ENCODE measurements at regions of chr20 and their contacts with region 1.

Region 1: DNA sequence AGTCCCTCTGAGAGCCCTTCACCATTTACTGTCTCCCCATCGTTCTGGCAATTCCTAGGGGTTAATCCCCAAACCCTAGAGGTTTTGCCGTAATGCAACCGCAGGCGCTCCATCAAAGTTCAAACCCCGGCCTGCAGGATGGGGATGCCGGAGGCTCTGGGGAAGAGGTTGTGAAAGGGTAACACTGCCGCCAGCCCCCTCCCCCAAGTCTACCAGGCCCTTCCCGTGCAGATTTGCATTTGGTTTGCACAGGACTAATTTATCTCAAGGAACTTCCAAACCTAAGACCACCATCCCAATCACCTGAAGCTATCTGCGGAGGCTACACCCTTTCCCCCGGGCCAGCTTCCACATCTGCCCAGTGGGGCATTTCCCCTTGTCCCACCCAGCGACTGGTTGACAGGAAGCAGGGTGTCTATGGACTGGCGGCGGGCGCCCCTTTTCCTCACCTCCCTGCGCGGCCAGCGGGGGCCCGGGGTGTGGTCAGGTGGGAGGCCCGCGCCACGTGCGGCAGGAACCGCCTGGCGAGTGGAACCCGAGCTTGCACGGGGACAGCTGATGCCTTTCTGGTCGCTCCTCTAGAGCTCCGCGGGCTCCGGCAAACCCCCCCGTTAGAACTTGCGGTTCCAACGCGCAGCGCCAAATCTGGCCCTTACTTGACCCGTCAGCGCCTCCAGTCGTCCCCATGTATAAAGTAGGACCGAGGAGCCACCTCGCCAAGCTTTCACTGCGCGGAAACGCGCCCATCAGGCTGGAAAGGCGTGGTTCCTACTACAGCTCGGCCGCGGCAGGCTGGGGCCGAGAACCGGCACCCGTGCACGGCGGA is 9.4 kb upstream of the SLC4A11 start:
- DNase-seq: peak; percentile 47
- ATAC-seq: peak; percentile 45
- H3K4me3 Mint-ChIP-seq: peak overlapping the region; percentile 8
- H3K27ac Mint-ChIP-seq: no peak overlapping the region
- H3K4me1 Mint-ChIP-seq: peaks cover 2% of the 10 kb centered on the region
- H3K27me3 Mint-ChIP-seq: peaks cover 23% of the 10 kb centered on the region

Region 2: DNA sequence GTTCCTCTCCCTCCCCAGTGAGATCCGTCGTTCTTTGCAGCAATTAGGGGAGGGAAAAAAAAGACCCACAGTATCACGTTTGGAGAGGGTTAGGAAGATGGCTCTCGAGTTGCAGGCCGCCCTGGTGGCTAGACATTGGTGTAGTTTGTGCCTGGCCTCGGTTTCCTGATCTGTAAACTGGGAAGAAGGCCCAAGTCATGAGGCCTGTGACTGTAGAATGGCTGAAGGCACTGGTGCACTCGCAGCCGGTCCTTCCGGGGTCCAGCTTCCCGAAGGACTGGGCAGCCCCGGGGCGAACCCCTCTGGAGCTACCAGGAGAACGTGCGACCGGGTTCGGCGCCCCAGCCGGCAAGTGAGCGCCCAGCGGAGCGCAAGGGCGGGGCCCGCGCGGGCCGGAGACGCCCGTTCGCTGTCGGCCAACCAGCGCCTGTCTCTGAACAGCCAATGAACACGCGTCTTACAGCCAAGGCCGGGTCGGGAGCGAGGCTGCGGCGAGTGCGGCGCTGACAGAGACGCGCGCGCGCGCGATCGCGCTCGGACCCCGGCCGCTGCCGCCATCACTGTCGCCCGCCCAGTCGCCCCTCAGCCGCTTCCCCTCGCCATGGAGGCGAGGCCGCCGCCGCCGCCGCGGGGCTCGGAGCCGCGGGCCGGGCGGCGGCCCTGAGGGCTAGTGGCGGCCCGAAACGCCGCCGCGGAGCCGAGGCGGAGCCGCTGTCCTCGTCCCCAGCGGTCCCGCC is 375.2 kb before region 1 on chr20 and contains the start of gene PTPRA:
- CTCF ChIA-PET with region 1: no interaction called
- POLR2A ChIA-PET with region 1: no interaction called
- intact Hi-C with region 1: no loop called
- DNase-seq: peak; percentile 96
- ATAC-seq: peak; percentile 91
- H3K4me3 Mint-ChIP-seq: peak within 1 kb of the TSS; percentile 84
- H3K27ac Mint-ChIP-seq: peak within 1 kb of the TSS; percentile 95
- H3K4me1 Mint-ChIP-seq: peaks cover 44% of the 10 kb centered on the region
- H3K27me3 Mint-ChIP-seq: no peaks in the 10 kb centered on the region
- total RNA-seq, gene PTPRA: 58.5 to 86.3 TPM

Region 3: GRCh38 chr20:3224681-3225421 is 23.5 kb before region 1 on chr20:
- CTCF ChIA-PET with region 1: interaction called, 5 read pairs
- POLR2A ChIA-PET with region 1: no interaction called
- intact Hi-C with region 1: loop called in 1 of 2 experiments (anchors 2 kb)
- DNase-seq: no peak
- ATAC-seq: no peak
- H3K4me3 Mint-ChIP-seq: no peak overlapping the region
- H3K27ac Mint-ChIP-seq: no peak overlapping the region
- H3K4me1 Mint-ChIP-seq: peaks cover 17% of the 10 kb centered on the region
- H3K27me3 Mint-ChIP-seq: no peaks in the 10 kb centered on the region

Region 4: GRCh38 chr20:3340443-3340842 is 92.1 kb after region 1 on chr20:
- CTCF ChIA-PET with region 1: no interaction called
- POLR2A ChIA-PET with region 1: no interaction called
- intact Hi-C with region 1: no loop called
- DNase-seq: no peak
- ATAC-seq: no peak
- H3K4me3 Mint-ChIP-seq: no peak overlapping the region
- H3K27ac Mint-ChIP-seq: no peak overlapping the region
- H3K4me1 Mint-ChIP-seq: no peaks in the 10 kb centered on the region
- H3K27me3 Mint-ChIP-seq: no peaks in the 10 kb centered on the region